RWPE1 (cell line): ENCODE measurements at regions of chr11 and their contacts with region 1.

Region 1: GRCh38 chr11:95999599-96000406 is 75.9 kb upstream of the MTMR2 start:
- DNase-seq: no peak
- H3K27ac ChIP-seq: no peak overlapping the region
- CTCF ChIP-seq: no peak

Region 2: DNA sequence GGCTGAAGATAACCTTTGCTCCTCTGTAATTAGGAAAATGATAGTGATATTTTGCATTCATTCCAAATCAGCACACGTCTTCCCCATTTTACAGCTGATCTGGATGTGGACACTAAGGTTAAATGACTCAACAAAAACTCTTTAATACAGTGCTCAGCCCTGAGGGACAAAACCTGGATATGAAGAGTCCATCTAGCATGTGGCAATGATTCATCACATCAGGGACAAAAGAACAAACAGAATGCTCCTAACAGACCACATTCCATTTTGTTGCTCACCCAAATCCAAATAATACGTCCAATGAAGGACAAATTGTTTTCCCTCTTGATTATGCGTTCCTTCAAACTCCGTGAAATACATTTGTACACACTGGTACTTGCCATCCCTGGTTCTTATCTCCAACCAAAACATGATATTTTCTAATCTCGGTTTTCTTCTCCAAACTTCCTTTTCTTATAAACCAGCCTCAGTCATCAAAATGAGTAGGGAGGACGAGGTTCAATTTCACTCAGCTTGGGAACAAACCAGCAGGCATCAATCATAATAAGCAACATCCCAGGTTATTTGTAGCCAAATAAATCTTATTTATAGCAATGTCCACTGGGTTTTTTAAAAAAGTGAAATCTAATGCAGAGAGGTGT is 22.1 kb before region 1 on chr11:
- CTCF ChIA-PET with region 1: interaction called, 12 read pairs
- POLR2A ChIA-PET with region 1: no interaction called
- DNase-seq: peak; percentile 2
- H3K27ac ChIP-seq: no peak overlapping the region
- CTCF ChIP-seq: no peak

Region 3: DNA sequence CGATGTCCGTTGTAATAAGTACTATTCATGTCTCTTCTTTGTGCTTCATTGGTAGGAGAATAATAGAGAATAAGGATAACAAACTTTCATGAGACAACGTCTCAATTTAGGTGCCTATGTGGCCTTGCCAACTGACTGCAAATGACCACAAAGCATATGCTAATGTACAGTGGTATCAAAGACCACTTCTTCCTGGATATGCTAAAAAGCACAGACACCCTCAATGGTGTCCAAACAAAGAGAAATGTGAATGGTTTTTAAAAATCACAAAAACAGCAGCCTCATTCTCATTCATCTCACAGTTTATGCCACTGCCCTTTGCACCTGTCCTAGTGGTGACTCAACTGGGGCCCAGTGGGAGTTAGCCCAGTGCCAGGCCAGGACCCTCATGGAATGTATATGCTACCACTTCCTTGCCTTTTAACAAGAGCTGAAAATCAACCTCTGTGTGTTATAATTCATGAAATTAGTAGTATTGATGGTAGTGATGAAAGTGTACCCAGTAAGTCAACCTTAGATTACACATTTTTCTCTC is 10.7 kb before region 1 on chr11:
- CTCF ChIA-PET with region 1: no interaction called
- POLR2A ChIA-PET with region 1: no interaction called
- DNase-seq: no peak
- H3K27ac ChIP-seq: no peak overlapping the region
- CTCF ChIP-seq: no peak

Region 4: GRCh38 chr11:96023275-96023674 is 23.5 kb after region 1 on chr11:
- CTCF ChIA-PET with region 1: no interaction called
- POLR2A ChIA-PET with region 1: no interaction called
- DNase-seq: no peak
- H3K27ac ChIP-seq: no peak overlapping the region
- CTCF ChIP-seq: no peak